Gastrocnemius medialis (tissue), 4 donors: ENCODE measurements at regions of chr1 and their contacts with region 1.

Region 1: DNA sequence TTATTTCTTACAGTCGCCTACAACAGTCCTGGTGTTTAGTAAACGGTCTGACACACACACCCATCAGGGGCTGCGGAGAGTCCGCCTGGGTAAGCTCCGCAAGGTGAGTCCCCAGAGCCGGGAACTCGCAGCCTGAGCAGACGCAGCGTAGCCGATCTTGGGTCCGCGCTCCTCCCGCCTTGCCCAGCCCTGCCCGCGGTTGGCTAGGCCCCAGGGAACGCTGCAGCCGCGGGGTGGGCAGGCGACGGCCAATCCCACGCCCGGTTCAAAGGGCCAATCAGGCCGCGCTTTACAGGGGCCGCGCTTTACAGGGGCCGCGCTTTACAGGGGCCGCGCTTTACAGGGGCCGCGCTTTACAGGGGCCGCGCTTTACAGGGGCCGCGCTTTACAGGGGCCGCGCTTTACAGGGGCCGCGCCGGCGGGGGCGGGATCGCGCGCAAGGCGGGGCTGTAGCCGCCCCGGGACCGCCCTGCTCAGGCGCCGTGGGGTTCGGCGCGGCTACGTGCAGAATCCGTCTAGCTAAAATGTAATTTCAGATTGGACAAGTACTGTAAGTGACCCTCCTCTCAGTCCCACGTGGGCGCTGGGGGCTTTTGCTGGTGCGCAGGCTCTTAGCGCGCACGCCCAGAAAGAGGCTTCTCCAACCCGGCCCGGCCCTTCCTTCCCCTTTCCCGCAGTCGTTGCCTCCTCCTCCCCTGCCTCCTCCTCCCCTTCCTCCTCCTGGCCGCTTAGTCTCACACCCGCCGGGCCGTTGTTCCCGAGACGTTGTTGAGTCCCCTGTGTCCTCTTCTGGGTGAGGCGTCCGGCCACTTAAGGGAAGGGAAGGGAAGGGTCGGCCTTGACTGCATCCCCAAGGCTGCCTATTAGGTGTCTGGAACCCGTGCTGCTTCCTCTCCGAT is at the start of gene FGGY:
- DNase-seq: peak; percentile 97 to 98
- ATAC-seq: peak; percentile 80 to 83
- H3K4me3 ChIP-seq: peak within 1 kb of the TSS; percentile 53 to 82 (median 70)
- H3K27ac ChIP-seq: peak within 1 kb of the TSS; percentile 90 to 99 (median 96)
- H3K4me1 ChIP-seq: peaks cover 17 to 48% of the 10 kb centered on the region in 2 donors
- H3K27me3 ChIP-seq: no peaks in the 10 kb centered on the region
- CTCF ChIP-seq: no peak
- POLR2A ChIP-seq: peak; percentile 84 to 86
- total RNA-seq, gene FGGY: 24.9 to 35.9 (median 30.5) TPM

Region 2: GRCh38 chr1:58883037-58883887 is 413.3 kb before region 1 on chr1:
- in situ Hi-C with region 1: loop called in 2 of 4 experiments (anchors 25 kb)
- intact Hi-C with region 1: loop called (anchors 5 kb)
- DNase-seq: peak; percentile 74 to 88
- ATAC-seq: peak; percentile 68 to 79
- H3K4me3 ChIP-seq: no peak overlapping the region
- H3K27ac ChIP-seq: peak overlapping the region; percentile 80 to 89 (median 84)
- H3K4me1 ChIP-seq: peaks cover 62 to 67% of the 10 kb centered on the region in 2 donors
- H3K27me3 ChIP-seq: no peaks in the 10 kb centered on the region
- CTCF ChIP-seq: no peak
- POLR2A ChIP-seq: no peak

Region 3: GRCh38 chr1:58968360-58968952 is 328.2 kb before region 1 on chr1:
- in situ Hi-C with region 1: loop called in 1 of 4 experiments (anchors 10 kb)
- intact Hi-C with region 1: loop called (anchors 1 kb)
- DNase-seq: peak; percentile 82 to 93
- ATAC-seq: peak; percentile 53 to 54
- H3K4me3 ChIP-seq: no peak overlapping the region
- H3K27ac ChIP-seq: peak overlapping the region; percentile 90 to 96 (median 93)
- H3K4me1 ChIP-seq: peaks cover 62 to 65% of the 10 kb centered on the region in 2 donors
- H3K27me3 ChIP-seq: no peaks in the 10 kb centered on the region
- CTCF ChIP-seq: peak in 1 of 5 experiments; percentile 11
- POLR2A ChIP-seq: peak; percentile 45 to 63

Region 4: GRCh38 chr1:59150577-59151391 is 145.8 kb before region 1 on chr1:
- in situ Hi-C with region 1: loop called in 2 of 4 experiments (anchors 10 kb)
- intact Hi-C with region 1: loop called (anchors 2 kb)
- DNase-seq: peak; percentile 87 to 94
- ATAC-seq: peak; percentile 85 to 86
- H3K4me3 ChIP-seq: peak overlapping the region; percentile 6 to 48 (median 36)
- H3K27ac ChIP-seq: peak overlapping the region; percentile 86 to 94 (median 87)
- H3K4me1 ChIP-seq: peaks cover 28 to 35% of the 10 kb centered on the region in 2 donors
- H3K27me3 ChIP-seq: no peaks in the 10 kb centered on the region
- CTCF ChIP-seq: no peak
- POLR2A ChIP-seq: no peak

Region 5: GRCh38 chr1:59178339-59179187 is 118.0 kb before region 1 on chr1:
- in situ Hi-C with region 1: no loop called
- intact Hi-C with region 1: no loop called
- DNase-seq: peak; percentile 27 to 43
- ATAC-seq: peak; percentile 60 to 79
- H3K4me3 ChIP-seq: no peak overlapping the region
- H3K27ac ChIP-seq: peak overlapping the region in 3 of 4 donors; percentile 37 to 53 (median 51)
- H3K4me1 ChIP-seq: no peaks in the 10 kb centered on the region
- H3K27me3 ChIP-seq: no peaks in the 10 kb centered on the region
- CTCF ChIP-seq: no peak
- POLR2A ChIP-seq: no peak

Region 6: DNA sequence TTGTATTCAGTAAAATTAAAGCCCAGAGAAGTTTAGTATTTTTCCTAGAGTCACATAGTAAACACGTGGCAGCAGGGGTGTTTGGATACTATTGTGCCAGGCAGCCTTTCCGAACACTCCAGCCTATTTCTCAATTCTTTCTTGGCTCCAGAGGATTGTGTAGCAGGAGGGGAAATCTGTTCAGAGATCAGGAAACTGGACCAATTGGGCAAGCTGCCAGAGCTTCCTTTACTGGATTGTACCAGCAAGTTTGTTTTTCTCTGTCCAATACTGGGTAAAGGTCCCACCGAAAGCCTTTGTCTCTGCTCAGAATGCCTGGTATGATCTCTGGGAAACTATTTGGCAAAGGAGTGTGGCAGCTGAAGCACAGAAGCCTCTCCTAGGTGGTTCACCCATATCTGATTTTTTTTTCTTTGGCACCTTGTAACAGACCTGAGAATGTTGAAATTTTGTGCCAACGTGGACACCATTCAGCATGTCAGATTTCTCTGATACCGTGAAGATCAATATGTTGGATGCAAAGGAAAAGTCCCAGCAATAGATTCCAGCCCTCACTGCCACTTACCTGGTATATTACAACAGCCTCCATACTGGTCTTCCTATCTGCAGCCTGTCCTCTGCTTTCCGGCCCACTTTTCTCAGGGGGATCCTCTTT is 126.4 kb after region 1 on chr1:
- in situ Hi-C with region 1: no loop called
- intact Hi-C with region 1: loop called (anchors 5 kb)
- DNase-seq: peak; percentile 60 to 87
- ATAC-seq: peak; percentile 36 to 74
- H3K4me3 ChIP-seq: no peak overlapping the region
- H3K27ac ChIP-seq: peak overlapping the region; percentile 71 to 90 (median 88)
- H3K4me1 ChIP-seq: peaks cover 64 to 66% of the 10 kb centered on the region in 2 donors
- H3K27me3 ChIP-seq: no peaks in the 10 kb centered on the region
- CTCF ChIP-seq: no peak
- POLR2A ChIP-seq: no peak

Region 7: DNA sequence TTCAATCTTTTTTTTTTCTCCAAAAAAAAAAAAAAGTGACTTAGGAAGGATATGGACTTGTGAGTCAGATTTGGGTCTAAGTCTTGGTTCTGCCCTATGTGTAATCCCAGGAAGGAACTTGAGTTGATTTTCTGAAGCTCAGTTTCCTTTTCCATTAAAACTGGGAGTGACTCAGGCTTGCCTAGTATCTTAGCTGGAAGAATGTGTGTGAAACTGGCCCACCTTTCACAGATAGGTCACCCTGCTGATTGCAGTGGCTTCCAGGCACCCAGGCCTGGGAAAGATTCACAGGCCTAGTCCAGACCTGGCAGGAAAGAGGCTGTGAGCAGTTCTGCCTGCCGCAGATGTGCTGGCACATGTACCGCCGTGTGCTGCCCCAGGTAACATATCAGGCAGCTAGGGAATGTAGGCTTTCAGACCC is 299.8 kb after region 1 on chr1:
- in situ Hi-C with region 1: no loop called
- intact Hi-C with region 1: loop called (anchors 5 kb)
- DNase-seq: peak in 1 of 2 donors; percentile 59
- ATAC-seq: peak; percentile 8 to 31
- H3K4me3 ChIP-seq: no peak overlapping the region
- H3K27ac ChIP-seq: peak overlapping the region; percentile 84 to 91 (median 86)
- H3K4me1 ChIP-seq: peaks cover 62 to 75% of the 10 kb centered on the region in 2 donors
- H3K27me3 ChIP-seq: no peaks in the 10 kb centered on the region
- CTCF ChIP-seq: no peak
- POLR2A ChIP-seq: no peak

Region 8: DNA sequence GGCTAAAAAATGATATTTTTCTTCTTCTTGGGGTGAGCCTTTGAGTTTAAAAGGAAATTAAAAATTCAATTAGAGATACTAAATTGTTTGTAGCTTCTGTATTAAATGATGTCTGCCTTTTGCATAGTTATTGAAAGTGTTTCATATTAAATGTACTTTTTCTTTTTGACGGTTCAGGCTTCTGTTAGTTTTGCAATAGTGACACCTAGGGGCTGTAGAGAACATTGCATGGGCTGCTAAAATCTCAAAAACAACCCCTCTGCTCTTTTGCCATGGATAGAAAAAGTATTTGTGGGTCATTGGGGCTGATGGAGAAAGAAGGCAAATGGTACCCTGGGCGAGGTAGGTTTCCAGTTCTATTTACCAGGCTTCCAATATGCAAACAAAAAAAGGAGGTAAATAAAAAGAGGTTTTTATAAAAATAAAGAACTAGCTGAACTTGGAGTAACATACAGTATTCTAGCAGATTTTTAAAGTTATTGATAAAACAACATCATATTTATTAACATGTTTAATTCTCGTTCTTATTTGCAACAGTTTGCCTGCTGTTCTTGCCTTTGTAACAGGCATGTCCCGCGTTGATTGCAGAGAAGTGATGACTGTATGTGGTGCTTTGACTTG is 402.7 kb after region 1 on chr1:
- in situ Hi-C with region 1: loop called in 2 of 4 experiments (anchors 10 kb)
- intact Hi-C with region 1: loop called (anchors 2 kb)
- DNase-seq: no peak
- ATAC-seq: peak; percentile 40 to 56
- H3K4me3 ChIP-seq: peak overlapping the region in 1 of 4 donors; percentile 12
- H3K27ac ChIP-seq: peak overlapping the region; percentile 71 to 77 (median 74)
- H3K4me1 ChIP-seq: peaks cover 53 to 59% of the 10 kb centered on the region in 2 donors
- H3K27me3 ChIP-seq: no peaks in the 10 kb centered on the region
- CTCF ChIP-seq: peak; percentile 86 to 97 (median 93)
- POLR2A ChIP-seq: no peak